Dorsolateral prefrontal cortex (tissue), 120 donors: ENCODE measurements at regions of chr7 and their contacts with region 1.

Region 1: GRCh38 chr7:45160417-45160881 is 2.9 kb downstream of the RAMP3 start:
- DNase-seq: peak in 2 of 10 donors; percentile 12 to 19
- H3K4me3 ChIP-seq: peak overlapping the region in 5 of 59 donors; percentile 8 to 38 (median 23)
- H3K27ac ChIP-seq: peak overlapping the region in 42 of 59 donors; percentile 6 to 82 (median 51)
- H3K27me3 ChIP-seq: no peaks in the 10 kb centered on the region
- CTCF ChIP-seq: no peak

Region 2: GRCh38 chr7:44944821-44945220 is 215.6 kb before region 1 on chr7:
- intact Hi-C with region 1: no loop called
- DNase-seq: no peak
- H3K4me3 ChIP-seq: no peak overlapping the region
- H3K27ac ChIP-seq: no peak overlapping the region
- H3K27me3 ChIP-seq: no peaks in the 10 kb centered on the region
- CTCF ChIP-seq: no peak

Region 3: GRCh38 chr7:45240273-45240771 is 79.9 kb after region 1 on chr7:
- intact Hi-C with region 1: loop called in 1 of 2 experiments (anchors 5 kb)
- DNase-seq: no peak
- H3K4me3 ChIP-seq: no peak overlapping the region
- H3K27ac ChIP-seq: no peak overlapping the region
- H3K27me3 ChIP-seq: peaks cover 0 to 3% (median 0%) of the 10 kb centered on the region in 45 donors
- CTCF ChIP-seq: no peak

Region 4: GRCh38 chr7:45259966-45260646 is 99.7 kb after region 1 on chr7:
- intact Hi-C with region 1: loop called in 1 of 2 experiments (anchors 1 kb)
- DNase-seq: peak in 9 of 10 donors; percentile 40 to 83 (median 68)
- H3K4me3 ChIP-seq: peak overlapping the region in 7 of 59 donors; percentile 1 to 34 (median 28)
- H3K27ac ChIP-seq: no peak overlapping the region
- H3K27me3 ChIP-seq: no peaks in the 10 kb centered on the region
- CTCF ChIP-seq: peak in 55 of 56 donors; percentile 92 to 100 (median 99)

Region 5: GRCh38 chr7:45863715-45864114 is 703.3 kb after region 1 on chr7:
- intact Hi-C with region 1: loop called in 1 of 2 experiments (anchors 10 kb)
- DNase-seq: no peak
- H3K4me3 ChIP-seq: no peak overlapping the region
- H3K27ac ChIP-seq: no peak overlapping the region
- H3K27me3 ChIP-seq: peaks cover 0 to 21% (median 0%) of the 10 kb centered on the region in 45 donors
- CTCF ChIP-seq: no peak